AG04449 (cell line): ENCODE measurements at regions of chr13 and their contacts with region 1.

Region 1: DNA sequence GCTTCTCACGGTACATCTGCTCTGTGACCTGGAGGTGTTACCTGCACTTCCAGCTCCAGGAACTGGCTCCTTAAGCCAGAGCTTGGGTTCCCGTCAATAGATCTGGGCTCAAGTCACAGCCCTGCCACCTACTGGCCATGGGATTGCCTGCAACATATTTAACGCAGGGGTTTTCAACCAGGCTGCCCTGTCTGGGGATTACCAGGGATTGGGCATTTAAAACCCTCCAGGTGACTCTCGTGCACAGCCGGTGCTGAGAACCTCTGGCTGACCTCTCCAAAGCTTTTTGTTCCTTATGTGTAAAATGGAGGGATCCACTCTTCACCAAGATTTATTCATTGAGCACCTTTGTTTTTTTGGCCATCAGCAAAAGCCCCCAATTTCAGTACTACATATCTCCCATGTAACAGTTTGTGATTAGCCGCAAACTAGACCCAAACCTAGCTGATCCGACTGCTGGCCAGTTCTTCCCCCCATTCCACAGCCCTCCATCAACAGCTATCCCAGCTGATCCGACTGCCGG is 76.6 kb upstream of the STK24 start:
- DNase-seq: peak; percentile 10
- H3K4me3 ChIP-seq: no peak overlapping the region
- CTCF ChIP-seq: peak; percentile 90

Region 2: DNA sequence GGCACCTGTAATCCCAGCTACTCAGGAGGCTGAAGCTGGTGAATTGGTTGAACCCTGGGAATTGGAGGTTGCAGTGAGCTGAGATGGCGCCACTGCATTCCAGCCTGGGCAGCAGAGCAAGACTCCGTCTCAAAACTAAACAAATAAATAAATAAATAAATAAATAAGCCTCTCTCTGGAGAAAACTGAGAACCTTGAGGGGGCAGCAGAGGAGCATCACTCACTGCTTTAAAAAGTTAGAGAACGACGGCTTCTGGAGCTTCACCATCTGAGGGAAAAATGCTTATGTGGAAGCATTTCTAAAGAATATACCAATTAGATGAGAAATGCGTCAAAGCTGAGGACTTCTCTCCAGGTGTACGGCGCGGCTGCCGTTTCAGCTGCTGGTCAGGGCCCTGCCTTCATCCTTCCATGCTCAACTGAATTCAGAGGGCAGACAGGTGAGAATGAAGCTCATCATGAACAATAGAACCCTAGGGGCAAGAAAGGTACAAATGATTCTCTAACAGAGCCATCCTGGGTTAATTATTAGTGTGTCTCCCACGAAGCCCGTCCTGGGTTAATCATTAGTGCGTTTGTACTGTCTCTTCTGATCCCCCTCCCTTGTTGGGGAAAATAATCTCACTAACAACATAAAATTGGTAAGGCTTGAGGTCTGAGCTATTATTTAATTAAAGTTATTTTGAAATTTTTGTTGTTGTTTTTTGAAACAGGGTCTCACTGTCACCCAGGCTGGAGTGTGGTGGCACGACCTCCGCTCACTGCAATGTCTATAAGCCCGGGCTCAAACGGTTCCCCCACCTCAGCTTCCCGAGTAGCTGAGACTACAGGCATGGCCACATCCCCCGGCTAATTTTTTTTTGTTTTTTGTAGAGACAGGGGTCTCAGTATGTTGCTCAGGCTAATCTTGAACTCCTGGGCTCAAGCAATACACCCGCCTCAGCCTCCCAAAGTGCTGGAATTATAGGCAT is 620.0 kb before region 1 on chr13:
- CTCF ChIA-PET with region 1: interaction called, 10 read pairs
- POLR2A ChIA-PET with region 1: interaction called, 5 read pairs
- DNase-seq: peak; percentile 19
- H3K4me3 ChIP-seq: no peak overlapping the region
- CTCF ChIP-seq: peak; percentile 35

Region 3: GRCh38 chr13:98454389-98454881 is 199.1 kb before region 1 on chr13:
- CTCF ChIA-PET with region 1: interaction called, 44 read pairs
- POLR2A ChIA-PET with region 1: no interaction called
- DNase-seq: peak; percentile 76
- H3K4me3 ChIP-seq: no peak overlapping the region
- CTCF ChIP-seq: no peak

Region 4: DNA sequence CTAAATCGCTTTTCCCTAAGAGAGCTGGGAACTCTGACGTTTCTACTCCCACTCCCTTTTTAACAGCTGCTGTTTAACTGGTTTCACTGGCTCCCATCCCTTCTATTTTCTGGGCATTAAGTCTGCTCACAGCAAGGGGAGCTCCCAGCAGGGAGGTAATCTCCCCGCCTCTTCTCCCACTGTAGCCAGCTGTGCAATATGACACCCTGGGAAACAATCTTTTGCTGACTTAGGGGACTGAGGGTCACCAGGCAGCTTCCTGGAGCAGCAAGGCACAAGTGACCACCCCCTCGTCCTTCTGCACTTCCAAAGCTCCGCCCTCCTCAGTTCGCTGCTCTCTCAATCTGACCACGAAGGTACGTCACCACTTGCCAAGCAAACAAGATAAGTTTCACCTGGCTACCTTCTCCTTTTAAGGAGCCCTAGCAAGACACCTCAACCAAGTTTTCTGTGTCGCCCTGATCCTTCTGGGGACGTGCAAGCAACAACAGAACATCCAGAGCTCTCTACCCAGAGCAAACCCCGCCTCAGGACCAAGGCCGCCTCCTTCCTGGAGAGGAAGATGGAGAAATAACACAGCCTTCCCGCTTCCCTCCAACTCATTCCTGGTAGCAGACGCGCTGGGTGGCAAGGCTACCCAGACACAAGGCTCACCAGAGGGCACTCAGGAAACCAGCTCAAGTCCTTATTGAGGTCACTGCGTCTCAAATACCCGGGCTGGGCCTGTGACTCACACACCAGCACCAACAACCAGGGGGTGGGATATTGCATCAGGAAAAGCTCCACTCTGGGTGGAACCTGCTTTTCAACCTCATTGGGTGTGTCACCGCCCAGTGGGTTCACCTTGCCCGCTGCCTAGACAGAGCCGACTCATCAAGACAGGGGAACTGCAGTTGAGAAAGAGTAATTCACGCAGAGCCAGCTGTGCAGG is 169.0 kb before region 1 on chr13:
- CTCF ChIA-PET with region 1: interaction called, 27 read pairs
- POLR2A ChIA-PET with region 1: no interaction called
- DNase-seq: peak; percentile 87
- H3K4me3 ChIP-seq: no peak overlapping the region
- CTCF ChIP-seq: no peak

Region 5: DNA sequence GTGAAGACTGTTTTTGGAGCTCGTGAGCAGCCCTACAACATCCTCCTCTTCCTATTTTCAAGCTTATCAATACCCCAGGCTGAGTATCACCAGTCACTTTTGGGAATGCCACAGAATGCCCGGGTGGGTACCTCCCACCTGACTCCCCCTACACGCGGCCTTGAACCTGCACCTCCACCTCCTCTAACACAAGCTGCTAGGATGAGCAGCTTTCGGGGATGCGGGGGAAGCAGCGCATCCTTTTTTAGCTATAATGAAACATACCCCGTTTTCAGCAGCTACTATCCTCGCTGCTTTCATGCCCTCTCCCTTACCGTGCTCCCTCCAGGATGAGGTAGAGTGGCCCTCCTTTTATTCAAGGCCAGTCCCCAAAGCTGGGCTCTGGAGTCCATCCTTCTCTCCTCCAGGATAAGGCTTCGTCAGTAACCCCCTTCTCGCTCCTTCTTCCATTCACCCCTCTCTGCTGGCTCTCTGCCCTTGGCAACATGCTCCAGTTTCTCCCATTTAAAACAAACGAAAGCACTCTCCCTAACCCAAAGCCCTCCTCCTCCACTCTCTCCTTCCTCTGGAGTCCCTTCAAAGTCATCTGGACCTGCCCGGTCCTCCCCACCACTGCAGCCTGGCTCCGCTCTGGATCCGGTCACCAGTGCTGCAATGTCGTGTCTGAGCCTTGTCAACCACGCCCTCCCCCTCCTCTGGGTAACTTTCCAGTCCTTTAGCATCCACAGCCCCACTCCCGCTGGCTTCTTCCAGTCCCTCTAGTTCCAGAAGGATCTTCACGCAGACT is 131.9 kb before region 1 on chr13:
- CTCF ChIA-PET with region 1: no interaction called
- POLR2A ChIA-PET with region 1: no interaction called
- DNase-seq: no peak
- H3K4me3 ChIP-seq: no peak overlapping the region
- CTCF ChIP-seq: no peak

Region 6: DNA sequence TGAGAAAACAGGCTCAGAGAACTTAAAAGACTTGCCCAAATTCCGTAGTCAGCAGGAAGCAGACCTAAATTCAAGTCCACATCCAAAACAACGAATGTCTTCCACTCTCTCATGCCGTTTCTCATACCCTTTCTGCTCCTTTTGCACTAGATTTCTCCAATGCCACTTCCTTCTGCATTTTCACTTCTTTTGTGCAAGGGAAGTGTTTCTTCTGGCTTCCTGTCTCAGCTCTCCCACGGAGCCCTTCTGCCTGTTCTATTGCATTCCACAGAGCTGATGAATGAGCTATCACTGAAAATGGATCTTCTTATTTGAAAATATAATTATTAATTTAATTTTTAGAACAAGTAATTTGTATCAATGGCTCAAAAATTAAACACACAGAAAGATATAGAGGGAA is 20.6 kb before region 1 on chr13:
- CTCF ChIA-PET with region 1: interaction called, 27 read pairs
- POLR2A ChIA-PET with region 1: no interaction called
- DNase-seq: no peak
- H3K4me3 ChIP-seq: no peak overlapping the region
- CTCF ChIP-seq: no peak

Region 7: GRCh38 chr13:98664039-98664438 is 10.5 kb after region 1 on chr13:
- CTCF ChIA-PET with region 1: interaction called, 36 read pairs
- POLR2A ChIA-PET with region 1: no interaction called
- DNase-seq: no peak
- H3K4me3 ChIP-seq: no peak overlapping the region
- CTCF ChIP-seq: no peak

Region 8: DNA sequence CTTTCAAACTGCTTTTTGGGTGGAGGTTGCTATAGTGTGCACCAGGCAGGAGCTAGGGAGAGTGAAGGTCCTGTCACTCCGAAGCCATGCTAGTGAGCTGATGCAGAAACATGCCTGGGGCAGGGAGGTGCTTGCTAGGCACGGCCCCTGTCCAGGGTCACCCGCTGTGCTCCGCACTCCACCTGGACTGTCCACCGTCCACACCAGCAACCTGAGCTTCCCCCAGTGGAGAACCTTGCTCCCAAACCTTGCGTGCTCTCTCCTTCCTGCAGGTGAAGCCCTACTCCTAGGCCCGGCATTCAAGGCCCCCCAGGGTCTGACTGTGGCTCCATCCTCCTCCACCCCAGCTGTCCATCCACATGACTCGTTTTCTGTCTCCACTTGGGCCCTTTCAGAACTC is 86.6 kb after region 1 on chr13:
- CTCF ChIA-PET with region 1: no interaction called
- POLR2A ChIA-PET with region 1: no interaction called
- DNase-seq: no peak
- H3K4me3 ChIP-seq: no peak overlapping the region
- CTCF ChIP-seq: no peak

Region 9: DNA sequence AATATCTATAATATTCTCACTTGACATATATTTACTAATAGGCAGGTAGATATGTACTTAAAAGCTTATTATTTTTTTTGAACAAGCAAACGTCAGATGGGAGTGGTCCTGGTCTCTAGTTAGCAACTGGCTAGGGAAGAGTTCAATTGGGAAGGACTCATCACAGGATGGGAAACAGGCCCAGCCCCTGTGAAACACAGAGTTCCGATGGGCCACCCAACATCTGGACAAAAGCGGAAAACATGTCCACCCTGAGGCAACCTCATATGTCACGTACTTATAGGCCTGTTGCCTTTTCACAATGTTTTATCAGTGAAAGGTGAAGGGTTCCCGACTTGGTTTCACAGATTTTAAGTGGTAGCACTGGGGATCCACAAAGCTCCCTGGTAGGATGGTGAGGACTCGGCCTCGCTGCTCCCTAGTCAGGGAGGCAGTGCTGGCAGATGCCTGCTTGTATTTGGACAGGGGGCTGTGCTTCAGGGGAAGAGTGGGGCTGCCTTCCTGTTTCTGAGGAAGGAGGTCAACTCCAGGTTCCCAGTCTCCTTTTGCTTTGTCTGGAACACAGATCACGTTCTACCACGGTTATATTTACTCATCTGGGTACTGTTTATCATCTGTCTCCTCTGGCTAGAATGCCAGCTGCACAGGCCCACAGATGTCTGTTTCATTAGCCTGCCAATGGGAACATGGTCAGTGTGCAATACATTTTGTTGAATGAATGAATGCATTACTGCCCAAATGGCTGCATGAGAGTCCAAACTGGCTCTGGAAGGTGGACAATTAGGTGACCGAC is 148.3 kb after region 1 on chr13:
- CTCF ChIA-PET with region 1: no interaction called
- POLR2A ChIA-PET with region 1: no interaction called
- DNase-seq: no peak
- H3K4me3 ChIP-seq: no peak overlapping the region
- CTCF ChIP-seq: no peak

Region 10: DNA sequence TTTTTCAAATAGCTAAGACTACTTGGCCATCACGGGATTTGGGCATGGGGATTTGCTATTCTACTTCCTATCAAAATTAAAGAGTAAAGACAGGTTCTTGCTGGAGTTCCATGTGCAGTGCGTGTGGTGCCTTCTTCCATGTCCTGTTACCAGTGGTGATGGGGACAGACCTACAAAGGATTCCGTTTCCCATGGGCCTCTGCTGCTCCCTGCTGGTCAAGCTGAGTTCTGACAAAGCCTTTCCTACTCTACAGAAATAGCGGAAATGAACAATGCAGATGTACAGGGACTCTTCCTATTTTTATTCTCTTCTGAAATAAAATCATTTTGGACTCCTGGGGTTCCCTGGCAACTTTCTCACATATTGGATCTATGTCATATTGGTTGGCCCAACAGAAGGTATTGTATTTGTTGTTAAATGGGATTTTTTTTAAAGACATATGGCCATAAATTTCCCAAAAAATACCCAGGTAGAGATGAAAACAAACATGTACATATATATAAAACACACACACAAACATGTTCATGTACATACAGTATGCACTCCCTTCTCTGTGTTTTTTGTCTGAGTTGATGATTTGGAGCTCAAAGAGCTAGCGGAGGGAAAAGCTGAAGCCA is 189.4 kb after region 1 on chr13:
- CTCF ChIA-PET with region 1: interaction called, 13 read pairs
- POLR2A ChIA-PET with region 1: no interaction called
- DNase-seq: no peak
- H3K4me3 ChIP-seq: no peak overlapping the region
- CTCF ChIP-seq: peak; percentile 89

Region 11: GRCh38 chr13:99053636-99054233 is 400.2 kb after region 1 on chr13:
- CTCF ChIA-PET with region 1: no interaction called
- POLR2A ChIA-PET with region 1: no interaction called
- DNase-seq: no peak
- H3K4me3 ChIP-seq: no peak overlapping the region
- CTCF ChIP-seq: no peak